Thyroid gland (tissue), 4 donors: ENCODE measurements at regions of chr1 and their contacts with region 1.

Region 1: DNA sequence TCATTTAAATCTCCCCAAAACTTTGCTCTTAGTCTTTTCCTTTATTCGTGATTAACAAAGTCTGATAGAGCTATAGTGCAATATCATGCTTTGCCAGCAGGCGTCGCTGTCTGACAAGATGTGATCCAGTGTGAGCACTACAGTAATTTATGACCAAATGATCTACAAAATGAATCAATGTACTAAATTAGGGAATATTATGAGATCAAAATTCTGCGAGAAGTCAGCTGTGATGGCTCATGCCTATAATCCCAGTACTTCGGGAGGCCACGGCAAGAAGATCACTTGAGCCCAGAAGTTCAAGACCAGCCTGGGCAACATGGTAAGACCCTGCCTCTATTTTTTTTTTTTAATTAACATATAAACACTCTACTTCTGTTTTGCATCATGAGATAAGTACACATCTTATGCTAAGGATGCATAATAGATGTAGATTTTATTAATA is 3.6 kb upstream of the SPSB1 start:
- DNase-seq: peak; percentile 63 to 80
- H3K4me3 ChIP-seq: no peak overlapping the region
- H3K27ac ChIP-seq: no peak overlapping the region
- H3K4me1 ChIP-seq: peaks cover 14 to 24% of the 10 kb centered on the region in 2 donors
- H3K27me3 ChIP-seq: no peaks in the 10 kb centered on the region
- CTCF ChIP-seq: peak; percentile 79 to 97 (median 93)
- POLR2A ChIP-seq: no peak

Region 2: DNA sequence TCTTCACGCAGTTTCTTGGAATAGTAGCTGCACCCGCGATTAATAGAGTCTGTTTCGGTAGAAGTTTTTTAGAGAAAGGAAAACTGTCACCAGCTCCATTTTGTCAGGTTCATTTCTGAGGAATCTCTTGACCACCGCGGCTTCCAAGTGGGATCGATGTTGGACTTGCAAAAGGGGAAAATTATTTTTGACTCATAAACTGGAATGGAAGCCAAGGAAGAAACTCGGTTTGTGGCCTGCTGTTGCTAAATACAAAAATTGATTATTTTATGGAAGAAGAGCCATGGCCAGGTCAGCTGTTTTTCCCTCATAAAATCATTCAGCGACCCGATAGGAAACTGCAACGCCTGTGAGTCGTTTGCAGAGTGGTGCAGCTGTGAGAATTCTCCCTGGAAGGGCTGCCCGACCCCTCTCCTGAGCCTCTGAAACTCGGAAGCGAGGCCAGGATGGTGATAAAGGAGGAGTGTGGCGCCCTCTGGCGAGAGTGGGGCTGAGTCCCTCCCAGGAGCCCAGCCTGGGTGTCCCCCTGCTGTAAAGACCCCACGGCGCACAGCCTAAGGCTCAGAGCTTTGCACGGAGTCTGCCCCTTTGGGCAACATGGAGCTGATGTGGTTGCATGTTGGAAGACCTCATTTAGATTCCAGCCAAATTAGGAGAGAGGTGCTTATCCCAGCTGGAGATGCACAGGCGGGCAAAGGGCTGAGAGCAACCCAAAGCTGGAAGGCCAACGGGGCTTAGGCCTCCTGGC is 166.5 kb after region 1 on chr1:
- intact Hi-C with region 1: loop called (anchors 2 kb)
- DNase-seq: peak; percentile 62 to 68
- H3K4me3 ChIP-seq: no peak overlapping the region
- H3K27ac ChIP-seq: no peak overlapping the region
- H3K4me1 ChIP-seq: no peaks in the 10 kb centered on the region
- H3K27me3 ChIP-seq: no peaks in the 10 kb centered on the region
- CTCF ChIP-seq: peak; percentile 46 to 84 (median 69)
- POLR2A ChIP-seq: no peak

Region 3: GRCh38 chr1:9494929-9495758 is 206.0 kb after region 1 on chr1:
- intact Hi-C with region 1: loop called (anchors 5 kb)
- DNase-seq: peak; percentile 48 to 51
- H3K4me3 ChIP-seq: no peak overlapping the region
- H3K27ac ChIP-seq: no peak overlapping the region
- H3K4me1 ChIP-seq: peaks cover 0 to 6% of the 10 kb centered on the region in 2 donors
- H3K27me3 ChIP-seq: no peaks in the 10 kb centered on the region
- CTCF ChIP-seq: peak; percentile 68 to 99 (median 96)
- POLR2A ChIP-seq: no peak

Region 4: DNA sequence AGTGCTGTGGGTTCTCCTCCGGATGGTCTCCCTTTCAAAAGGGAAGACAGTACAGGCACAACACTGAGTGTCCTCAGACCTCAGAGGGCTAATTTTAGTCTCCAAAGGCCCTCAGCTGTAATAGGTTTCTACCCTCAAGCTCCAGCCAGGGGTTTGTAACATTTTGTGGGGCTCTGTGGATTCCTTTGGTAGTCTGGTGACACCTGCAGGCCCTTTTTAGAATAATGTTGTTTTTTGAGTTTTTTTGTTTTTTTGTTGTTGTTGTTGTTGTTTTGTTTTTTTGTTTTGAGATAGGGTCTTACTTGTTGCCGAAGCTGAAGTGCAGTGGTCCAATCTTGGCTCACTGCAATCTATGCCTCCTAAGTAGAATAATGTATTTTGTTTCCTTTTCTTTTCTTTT is 284.6 kb after region 1 on chr1:
- intact Hi-C with region 1: loop called (anchors 10 kb)
- DNase-seq: no peak
- H3K4me3 ChIP-seq: no peak overlapping the region
- H3K27ac ChIP-seq: no peak overlapping the region
- H3K4me1 ChIP-seq: peaks cover 0 to 23% of the 10 kb centered on the region in 2 donors
- H3K27me3 ChIP-seq: no peaks in the 10 kb centered on the region
- CTCF ChIP-seq: peak in 4 of 6 experiments; percentile 18 to 72 (median 52)
- POLR2A ChIP-seq: no peak